Heart left ventricle (tissue), 16 donors: ENCODE measurements at regions of chr11 and their contacts with region 1.

Region 1: GRCh38 chr11:67572747-67573419 is 10.7 kb upstream of the GSTP1 start:
- DNase-seq: peak in 4 of 5 donors; percentile 36 to 67 (median 55)
- ATAC-seq: peak in 1 of 4 donors; percentile 59
- H3K4me3 ChIP-seq: no peak overlapping the region
- H3K27ac ChIP-seq: no peak overlapping the region
- H3K4me1 ChIP-seq: no peaks in the 10 kb centered on the region
- H3K27me3 ChIP-seq: peaks cover 0 to 29% (median 0%) of the 10 kb centered on the region in 9 donors
- CTCF ChIP-seq: peak; percentile 57 to 86 (median 72)
- POLR2A ChIP-seq: no peak

Region 2: GRCh38 chr11:67656278-67656922 is 83.5 kb after region 1 on chr11:
- intact Hi-C with region 1: loop called in 6 of 10 experiments (anchors 2 to 10 kb)
- DNase-seq: peak in 1 of 5 donors; percentile 3
- ATAC-seq: no peak
- H3K4me3 ChIP-seq: no peak overlapping the region
- H3K27ac ChIP-seq: no peak overlapping the region
- H3K4me1 ChIP-seq: no peaks in the 10 kb centered on the region
- H3K27me3 ChIP-seq: no peaks in the 10 kb centered on the region
- CTCF ChIP-seq: no peak
- POLR2A ChIP-seq: no peak

Region 3: GRCh38 chr11:67665541-67666362 is 92.9 kb after region 1 on chr11:
- intact Hi-C with region 1: loop called in 1 of 10 experiments (anchors 10 kb)
- DNase-seq: peak in 1 of 5 donors; percentile 45
- ATAC-seq: peak; percentile 21 to 55 (median 40)
- H3K4me3 ChIP-seq: no peak overlapping the region
- H3K27ac ChIP-seq: no peak overlapping the region
- H3K4me1 ChIP-seq: no peaks in the 10 kb centered on the region
- H3K27me3 ChIP-seq: no peaks in the 10 kb centered on the region
- CTCF ChIP-seq: peak in 8 of 12 donors; percentile 9 to 37 (median 19)
- POLR2A ChIP-seq: no peak